ENCODE measurements at regions of chr18 and their contacts with region 1.

Region 1: GRCh38 chr18:34543945-34544344 is 166.2 kb upstream of the DTNA start:
- DNase-seq: no peak
- ATAC-seq: peak; percentile 58
- H3K4me3 ChIP-seq: no peak overlapping the region
- H3K27ac ChIP-seq: no peak overlapping the region
- H3K4me1 ChIP-seq: no peaks in the 10 kb centered on the region
- H3K27me3 ChIP-seq: no peaks in the 10 kb centered on the region
- CTCF ChIP-seq: no peak
- EP300 ChIP-seq: no peak
- POLR2A ChIP-seq: no peak
- RAD21 ChIP-seq: no peak

Region 2: GRCh38 chr18:34529358-34530335 is 14.3 kb before region 1 on chr18:
- CTCF ChIA-PET with region 1: interaction called, 3 read pairs
- POLR2A ChIA-PET with region 1: interaction called, 6 read pairs
- RAD21 ChIA-PET with region 1: interaction called, 9 read pairs
- SMC1A ChIA-PET with region 1: interaction called, 11 read pairs
- in situ Hi-C with region 1: no loop called
- intact Hi-C with region 1: no loop called
- DNase-seq: no peak
- ATAC-seq: no peak
- H3K4me3 ChIP-seq: no peak overlapping the region
- H3K27ac ChIP-seq: no peak overlapping the region
- H3K4me1 ChIP-seq: no peaks in the 10 kb centered on the region
- H3K27me3 ChIP-seq: no peaks in the 10 kb centered on the region
- CTCF ChIP-seq: no peak
- EP300 ChIP-seq: no peak
- POLR2A ChIP-seq: no peak
- RAD21 ChIP-seq: no peak

Measured in GM12878 (cell line).